Activated T-helper 1 cell treated with anti-CD3 and anti-CD28 coated beads, Interleukin-12 subunit alpha, Interleukin-12 subunit beta, Interleukin-2, Interleukin-4 antibody, amounts not matched to agents 30 ng/mL and 10 ng/mL and 1 ng/mL, durations not matched to agents 14 hours and 24 hours and 36 hours (primary cell): ENCODE measurements at regions of chr6 and their contacts with region 1.

Region 1: GRCh38 chr6:163413345-163414116 is 987 bp upstream of the QKI start:
- DNase-seq: peak; percentile 89
- H3K4me3 Mint-ChIP-seq: peak overlapping the region; percentile 87
- H3K27ac Mint-ChIP-seq: peak overlapping the region; percentile 92
- H3K4me1 Mint-ChIP-seq: peaks cover 41% of the 10 kb centered on the region
- H3K27me3 Mint-ChIP-seq: peaks cover 3% of the 10 kb centered on the region

Region 2: DNA sequence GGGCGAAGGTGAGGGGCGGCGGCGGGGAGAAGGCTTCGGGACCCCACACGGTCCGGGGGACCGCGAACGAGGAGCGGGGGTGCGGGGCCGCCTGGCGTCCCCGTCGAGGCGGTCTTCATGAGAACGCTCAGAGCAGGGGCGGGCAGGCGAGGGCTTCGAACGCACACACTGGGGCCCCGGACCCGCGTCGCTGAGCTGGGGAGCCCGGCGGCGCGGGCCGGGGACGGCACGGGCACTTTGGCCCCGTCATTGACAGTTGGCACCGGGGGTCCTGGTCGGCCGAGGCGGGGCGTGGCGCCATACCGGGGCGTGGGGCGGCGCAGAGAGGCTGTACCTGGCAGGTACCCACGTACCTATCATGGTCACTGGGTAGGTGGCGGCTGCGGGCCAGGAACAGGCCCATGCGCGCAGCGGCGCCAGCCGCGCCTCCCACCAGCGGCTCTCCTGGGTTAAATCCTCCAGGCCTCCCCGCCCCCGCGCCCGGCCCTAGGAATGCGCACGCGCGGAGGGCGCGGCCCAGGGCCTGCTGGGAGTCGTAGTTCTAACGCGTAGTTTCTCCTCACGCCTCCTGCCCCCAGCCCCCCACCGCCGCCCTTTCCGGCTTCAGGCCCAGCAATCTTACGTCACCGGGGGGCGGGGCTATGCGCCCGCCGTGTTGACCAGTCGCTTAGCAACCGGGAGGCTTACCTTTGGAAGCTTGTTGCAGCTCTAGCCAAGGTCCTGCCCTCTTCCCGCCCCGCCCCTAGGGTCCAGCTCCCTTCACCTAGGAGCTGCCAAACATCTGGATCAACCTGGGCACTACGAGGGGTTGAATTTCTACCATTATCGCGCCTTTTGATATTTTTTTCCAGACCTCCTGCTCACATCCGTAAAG is 686.0 kb before region 1 on chr6 and contains the starts of genes PACRG and PRKN:
- intact Hi-C with region 1: loop called (anchors 2 kb)
- DNase-seq: peak; percentile 95
- H3K4me3 Mint-ChIP-seq: peak within 1 kb of the TSS; percentile 89
- H3K27ac Mint-ChIP-seq: peak within 1 kb of the TSS; percentile 86
- H3K4me1 Mint-ChIP-seq: peaks cover 11% of the 10 kb centered on the region
- H3K27me3 Mint-ChIP-seq: peaks cover 7% of the 10 kb centered on the region
- total RNA-seq, gene PACRG: 0.36 TPM in 1 of 2 replicates, not detected in the other
- total RNA-seq, gene PRKN: not detected in 2 replicates

Region 3: DNA sequence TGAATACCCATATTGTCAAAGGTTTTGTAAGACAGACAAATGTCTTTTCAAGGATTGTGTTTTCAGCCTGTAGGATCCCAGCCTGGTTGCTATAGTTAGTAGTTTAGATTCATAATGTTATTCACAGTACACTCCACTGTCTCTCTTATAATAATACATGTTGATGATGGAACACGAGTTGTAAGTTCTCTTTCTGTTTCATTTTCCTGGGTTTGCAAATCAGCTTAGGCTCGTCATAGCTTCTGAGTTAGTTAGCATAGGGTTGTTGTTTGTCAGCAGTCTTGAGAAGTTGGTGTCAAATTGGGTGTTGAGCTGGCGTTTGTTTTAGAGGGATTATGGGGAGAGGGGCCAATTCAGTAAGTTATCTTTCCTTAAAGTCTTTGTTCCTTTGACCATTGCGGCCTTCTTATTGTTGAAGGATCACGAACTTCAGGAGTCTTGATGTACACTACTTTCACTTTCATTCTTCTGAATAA is 46.8 kb after region 1 on chr6:
- intact Hi-C with region 1: loop called (anchors 1 kb)
- DNase-seq: peak; percentile 27
- H3K4me3 Mint-ChIP-seq: peak overlapping the region; percentile 88
- H3K27ac Mint-ChIP-seq: peak overlapping the region; percentile 90
- H3K4me1 Mint-ChIP-seq: peaks cover 74% of the 10 kb centered on the region
- H3K27me3 Mint-ChIP-seq: no peaks in the 10 kb centered on the region

Region 4: GRCh38 chr6:163750431-163751031 is 337.0 kb after region 1 on chr6:
- intact Hi-C with region 1: loop called (anchors 5 kb)
- DNase-seq: peak; percentile 7
- H3K4me3 Mint-ChIP-seq: peak overlapping the region; percentile 56
- H3K27ac Mint-ChIP-seq: peak overlapping the region; percentile 90
- H3K4me1 Mint-ChIP-seq: peaks cover 16% of the 10 kb centered on the region
- H3K27me3 Mint-ChIP-seq: peaks cover 8% of the 10 kb centered on the region